Upper lobe of right lung (tissue), 1 donor: ENCODE measurements at regions of chr6 and their contacts with region 1.

Region 1: GRCh38 chr6:3052481-3053230 is 15.6 kb upstream of the RIPK1 start:
- DNase-seq: no peak
- ATAC-seq: no peak
- H3K4me3 ChIP-seq: no peak overlapping the region
- H3K27ac ChIP-seq: no peak overlapping the region
- H3K4me1 ChIP-seq: peaks cover 7% of the 10 kb centered on the region
- H3K27me3 ChIP-seq: no peaks in the 10 kb centered on the region
- CTCF ChIP-seq: no peak

Region 2: DNA sequence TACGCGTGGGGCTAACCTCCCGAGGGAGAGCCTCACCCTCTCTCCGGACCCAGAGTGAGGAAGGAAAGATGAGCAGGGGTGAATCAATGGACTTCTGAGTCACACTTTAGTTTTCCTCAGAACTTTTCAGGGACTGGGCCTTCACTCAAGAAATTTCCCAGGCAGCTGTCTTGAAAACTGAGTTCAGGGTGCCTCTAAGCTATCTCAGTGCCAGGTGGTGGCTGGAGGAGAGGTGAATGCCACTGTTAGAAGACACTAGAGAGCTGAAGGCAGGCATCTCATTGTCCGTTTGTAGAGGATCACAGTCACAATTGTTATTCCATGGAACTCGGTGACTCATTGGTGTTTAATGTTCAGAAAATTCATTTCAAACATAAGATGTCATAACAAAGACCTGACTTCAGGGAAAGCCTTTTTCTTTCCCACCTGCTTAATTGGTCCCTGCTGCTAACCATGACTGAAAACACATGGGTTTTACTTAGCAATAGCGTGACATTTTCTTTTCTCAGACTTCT is 76.0 kb before region 1 on chr6:
- intact Hi-C with region 1: no loop called
- DNase-seq: no peak
- ATAC-seq: no peak
- H3K4me3 ChIP-seq: no peak overlapping the region
- H3K27ac ChIP-seq: no peak overlapping the region
- H3K4me1 ChIP-seq: peaks cover 24% of the 10 kb centered on the region
- H3K27me3 ChIP-seq: no peaks in the 10 kb centered on the region
- CTCF ChIP-seq: no peak

Region 3: DNA sequence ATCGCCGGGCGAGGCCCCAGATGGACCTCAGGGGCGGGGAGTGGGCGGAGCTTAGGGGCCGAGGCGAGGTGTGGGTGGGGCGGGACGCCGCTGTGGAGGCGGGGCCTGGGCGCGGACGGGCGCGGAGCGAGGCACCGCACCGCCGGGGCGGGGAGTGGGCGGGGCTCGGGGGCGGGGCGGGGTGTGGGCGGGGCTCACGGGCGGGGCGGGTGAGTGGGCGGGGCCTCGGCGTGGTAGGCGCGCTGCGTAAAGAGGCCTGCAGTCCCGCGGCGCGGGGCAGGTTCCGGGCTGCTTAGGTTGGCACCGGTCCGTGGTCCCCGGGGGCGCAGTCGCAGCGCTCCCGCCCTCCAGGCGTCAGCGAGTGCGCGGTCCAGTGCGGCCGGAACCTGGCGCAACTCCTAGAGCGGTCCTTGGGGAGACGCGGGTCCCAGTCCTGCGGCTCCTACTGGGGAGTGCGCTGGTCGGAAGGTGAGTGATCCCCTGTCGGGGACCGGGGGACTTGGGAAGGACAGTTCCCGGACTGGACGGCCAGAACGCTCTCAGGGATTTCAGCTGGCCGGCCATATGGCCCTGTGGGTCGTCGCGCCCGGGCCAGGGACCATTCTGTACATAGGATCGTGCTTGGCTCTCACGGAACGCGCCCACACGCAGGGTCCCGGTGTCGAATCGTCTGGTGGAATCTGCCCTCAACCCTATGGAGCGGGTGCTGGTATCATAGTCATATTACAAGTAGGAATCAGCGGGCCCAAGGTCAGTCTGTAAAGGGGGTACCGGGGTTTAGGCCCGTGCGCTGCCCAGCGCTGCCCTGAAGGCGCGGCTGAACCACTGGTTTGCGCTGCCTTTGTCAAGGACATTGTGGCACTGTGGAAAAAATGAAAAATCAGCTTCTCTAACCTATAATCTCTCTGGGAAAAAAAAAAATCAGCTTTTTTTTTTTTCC is 52.8 kb before region 1 on chr6 and contains the start of gene NQO2:
- intact Hi-C with region 1: loop called (anchors 2 kb)
- DNase-seq: peak; percentile 98
- ATAC-seq: peak; percentile 96
- H3K4me3 ChIP-seq: peak within 1 kb of the TSS; percentile 75
- H3K27ac ChIP-seq: peak within 1 kb of the TSS; percentile 89
- H3K4me1 ChIP-seq: peaks cover 11% of the 10 kb centered on the region
- H3K27me3 ChIP-seq: no peaks in the 10 kb centered on the region
- CTCF ChIP-seq: no peak
- total RNA-seq, gene NQO2: 20.6 TPM